T-cell (primary cell): ENCODE measurements at regions of chr3 and their contacts with region 1.

Region 1: GRCh38 chr3:112043603-112044201 is 9.2 kb downstream of the TMPRSS7 start:
- DNase-seq: peak in 34 of 35 experiments; percentile 9 to 76 (median 31)
- ATAC-seq: peak; percentile 88 to 97 (median 90)
- H3K4me3 ChIP-seq: no peak overlapping the region
- H3K4me3 Mint-ChIP-seq: no peak overlapping the region
- H3K27ac ChIP-seq: no peak overlapping the region
- H3K27ac Mint-ChIP-seq: no peak overlapping the region
- H3K4me1 ChIP-seq: no peaks in the 10 kb centered on the region
- H3K4me1 Mint-ChIP-seq: no peaks in the 10 kb centered on the region
- H3K27me3 ChIP-seq: no peaks in the 10 kb centered on the region
- H3K27me3 Mint-ChIP-seq: peaks cover 0 to 4% of the 10 kb centered on the region in 2 donors

Region 2: GRCh38 chr3:111989061-111989678 is 54.5 kb before region 1 on chr3:
- CTCF ChIA-PET with region 1: interaction called, 4 to 13 read pairs
- POLR2A ChIA-PET with region 1: no interaction called
- DNase-seq: peak in 1 of 35 experiments; percentile 61
- ATAC-seq: peak; percentile 57 to 79 (median 72)
- H3K4me3 ChIP-seq: no peak overlapping the region
- H3K4me3 Mint-ChIP-seq: no peak overlapping the region
- H3K27ac ChIP-seq: no peak overlapping the region
- H3K27ac Mint-ChIP-seq: no peak overlapping the region
- H3K4me1 ChIP-seq: peaks cover 0 to 9% of the 10 kb centered on the region in 2 experiments
- H3K4me1 Mint-ChIP-seq: peaks cover 31 to 36% (median 33%) of the 10 kb centered on the region in 3 donors
- H3K27me3 ChIP-seq: no peaks in the 10 kb centered on the region
- H3K27me3 Mint-ChIP-seq: no peaks in the 10 kb centered on the region

Region 3: DNA sequence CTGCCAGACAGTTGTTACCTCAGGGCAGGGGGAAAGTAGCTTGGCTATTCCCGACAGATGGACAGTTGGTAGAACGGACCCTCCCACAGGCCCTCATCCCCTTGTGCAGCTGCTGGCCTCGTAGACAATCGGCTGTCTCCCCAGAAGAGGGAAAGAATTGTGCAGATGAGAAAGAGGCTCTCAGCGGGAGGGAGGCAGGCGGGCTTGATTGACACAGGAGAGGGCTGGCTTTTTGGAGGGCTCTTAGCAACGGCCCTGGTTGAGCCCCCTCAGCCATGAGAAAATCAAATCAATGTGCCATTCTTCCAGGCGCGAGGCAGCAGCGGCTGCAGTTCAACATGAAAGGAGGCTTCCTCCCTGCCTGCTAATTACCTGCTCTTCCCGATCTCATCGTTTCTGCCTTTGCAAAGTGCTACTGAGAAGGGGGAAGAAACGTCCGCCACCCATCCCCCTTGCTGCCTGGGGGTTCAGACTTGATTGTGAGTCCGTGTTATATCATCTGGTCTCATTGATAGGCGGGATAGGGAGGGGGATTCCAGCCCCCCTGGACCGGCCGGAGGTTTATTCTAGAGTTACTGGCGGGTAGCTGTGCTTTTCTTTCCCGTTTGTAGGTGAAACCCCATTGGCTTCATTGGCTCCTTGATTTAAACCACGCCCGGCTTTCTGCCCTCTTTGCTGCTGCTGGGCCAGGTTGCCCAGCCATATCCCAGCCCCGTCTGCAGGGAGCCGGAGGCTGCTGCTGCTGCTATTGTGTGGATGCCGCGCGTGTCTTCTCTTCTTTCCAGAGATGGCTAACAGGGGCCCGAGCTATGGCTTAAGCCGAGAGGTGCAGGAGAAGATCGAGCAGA is 44.8 kb before region 1 on chr3 and contains the start of gene TAGLN3:
- CTCF ChIA-PET with region 1: interaction called in 1 of 2 experiments, 14 read pairs
- POLR2A ChIA-PET with region 1: no interaction called
- DNase-seq: peak in 2 of 35 experiments; percentile 0 to 19
- ATAC-seq: peak; percentile 28 to 62 (median 36)
- H3K4me3 ChIP-seq: peak within 1 kb of the TSS in 1 of 2 donors; percentile 80
- H3K4me3 Mint-ChIP-seq: peak within 1 kb of the TSS; percentile 69 to 77 (median 72)
- H3K27ac ChIP-seq: no peak within 1 kb of the TSS
- H3K27ac Mint-ChIP-seq: no peak within 1 kb of the TSS
- H3K4me1 ChIP-seq: peaks cover 21 to 29% of the 10 kb centered on the region in 2 experiments
- H3K4me1 Mint-ChIP-seq: peaks cover 28 to 35% (median 34%) of the 10 kb centered on the region in 3 donors
- H3K27me3 ChIP-seq: peaks cover 0 to 10% of the 10 kb centered on the region in 2 experiments
- H3K27me3 Mint-ChIP-seq: peaks cover 1 to 4% of the 10 kb centered on the region in 2 donors
- total RNA-seq, gene TAGLN3: not detected